GM12878 (cell line): ENCODE measurements at regions of chr14 and their contacts with region 1.

Region 1: DNA sequence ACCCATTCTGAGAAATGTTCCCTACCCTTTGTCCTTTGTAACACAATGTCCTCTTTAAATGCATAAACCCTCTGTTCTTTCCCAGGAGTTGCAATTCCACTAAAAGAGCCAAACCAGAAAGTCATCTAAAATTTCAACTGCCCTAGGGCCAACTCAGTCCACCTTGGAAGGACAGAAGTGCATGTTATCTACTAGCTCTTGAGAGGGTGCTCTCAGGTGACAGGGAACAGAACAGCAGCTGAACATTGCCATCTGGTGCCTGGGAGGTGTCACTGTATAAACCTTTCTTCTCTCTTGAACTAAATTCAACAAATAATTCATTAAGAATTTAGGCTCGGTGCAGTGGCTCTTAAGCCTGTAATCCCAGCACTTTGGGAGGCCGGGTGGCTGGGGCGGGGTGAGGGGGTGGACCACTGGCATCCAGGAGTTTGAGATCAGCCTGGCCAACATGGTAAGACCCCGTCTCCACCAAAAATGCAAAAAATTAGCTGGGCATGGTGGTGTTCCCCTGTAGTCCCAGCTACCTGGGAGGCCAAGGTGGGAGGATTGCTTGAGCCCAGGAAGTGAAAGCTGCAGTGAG is 10.3 kb upstream of the FERMT2 start:
- DNase-seq: peak; percentile 13
- ATAC-seq: peak; percentile 96
- H3K4me3 ChIP-seq: no peak overlapping the region
- H3K27ac ChIP-seq: no peak overlapping the region
- H3K4me1 ChIP-seq: no peaks in the 10 kb centered on the region
- H3K27me3 ChIP-seq: no peaks in the 10 kb centered on the region
- CTCF ChIP-seq: peak; percentile 58 to 82 (median 64)
- EP300 ChIP-seq: no peak
- POLR2A ChIP-seq: no peak
- RAD21 ChIP-seq: peak; percentile 95

Region 2: GRCh38 chr14:52829527-52829926 is 131.6 kb before region 1 on chr14:
- CTCF ChIA-PET with region 1: interaction called, 115 read pairs
- POLR2A ChIA-PET with region 1: interaction called, 4 read pairs
- RAD21 ChIA-PET with region 1: interaction called, 68 read pairs
- SMC1A ChIA-PET with region 1: interaction called, 58 read pairs
- in situ Hi-C with region 1: loop called (anchors 5 kb)
- intact Hi-C with region 1: no loop called
- DNase-seq: no peak
- ATAC-seq: no peak
- H3K4me3 ChIP-seq: no peak overlapping the region
- H3K27ac ChIP-seq: no peak overlapping the region
- H3K4me1 ChIP-seq: peaks cover 2% of the 10 kb centered on the region
- H3K27me3 ChIP-seq: no peaks in the 10 kb centered on the region
- CTCF ChIP-seq: no peak
- EP300 ChIP-seq: no peak
- POLR2A ChIP-seq: no peak
- RAD21 ChIP-seq: no peak

Region 3: DNA sequence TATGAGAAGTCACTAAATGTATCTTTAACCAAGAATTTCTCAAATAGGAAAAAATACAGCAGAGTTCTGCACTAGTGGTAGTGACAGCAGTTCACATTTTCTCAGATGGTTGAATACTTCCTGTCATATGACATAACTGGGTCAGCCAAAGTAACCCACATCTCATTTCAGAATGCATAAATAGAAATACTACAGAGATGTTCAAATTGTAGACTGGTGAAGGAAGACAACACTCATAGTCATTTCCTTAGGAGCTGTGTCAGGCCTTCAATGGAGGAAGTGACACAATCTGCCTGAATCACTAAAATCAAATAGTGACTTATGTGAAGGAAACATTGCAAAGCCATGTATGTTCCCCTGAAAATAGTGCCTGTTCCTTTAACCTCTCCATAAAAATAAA is 42.7 kb before region 1 on chr14:
- CTCF ChIA-PET with region 1: interaction called, 43 read pairs
- POLR2A ChIA-PET with region 1: no interaction called
- RAD21 ChIA-PET with region 1: interaction called, 22 read pairs
- SMC1A ChIA-PET with region 1: interaction called, 47 read pairs
- in situ Hi-C with region 1: no loop called
- intact Hi-C with region 1: no loop called
- DNase-seq: peak; percentile 62
- ATAC-seq: peak; percentile 93
- H3K4me3 ChIP-seq: no peak overlapping the region
- H3K27ac ChIP-seq: peak overlapping the region; percentile 36
- H3K4me1 ChIP-seq: peaks cover 6% of the 10 kb centered on the region
- H3K27me3 ChIP-seq: no peaks in the 10 kb centered on the region
- CTCF ChIP-seq: no peak
- EP300 ChIP-seq: 0 out of 4 replicates have a peak, but pooled peaks have one; percentile 26 to 40
- POLR2A ChIP-seq: no peak
- RAD21 ChIP-seq: no peak

Region 4: DNA sequence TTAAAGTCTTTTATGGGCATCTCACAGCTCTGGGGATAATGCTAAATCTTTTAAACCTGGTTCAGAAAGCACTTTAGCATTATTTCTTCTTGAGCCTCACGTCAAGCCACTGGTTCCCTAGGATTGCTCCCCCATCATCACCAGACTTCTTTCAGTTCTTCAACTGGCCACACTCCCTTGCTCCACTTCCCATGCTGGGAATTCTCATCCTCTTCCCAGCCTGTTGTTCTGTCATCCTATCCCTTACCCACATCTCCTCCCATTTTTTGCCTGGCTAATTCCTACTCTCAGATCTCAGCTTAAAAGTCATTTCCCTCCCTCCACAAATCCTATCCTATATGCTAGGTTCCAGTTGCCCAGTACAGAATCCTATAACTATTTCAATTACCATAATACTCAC is 24.7 kb before region 1 on chr14:
- CTCF ChIA-PET with region 1: interaction called, 9 read pairs
- POLR2A ChIA-PET with region 1: no interaction called
- RAD21 ChIA-PET with region 1: interaction called, 3 read pairs
- SMC1A ChIA-PET with region 1: interaction called, 13 read pairs
- in situ Hi-C with region 1: no loop called
- intact Hi-C with region 1: no loop called
- DNase-seq: no peak
- ATAC-seq: no peak
- H3K4me3 ChIP-seq: no peak overlapping the region
- H3K27ac ChIP-seq: no peak overlapping the region
- H3K4me1 ChIP-seq: no peaks in the 10 kb centered on the region
- H3K27me3 ChIP-seq: no peaks in the 10 kb centered on the region; a peak in 1 of 4 replicates
- CTCF ChIP-seq: no peak
- EP300 ChIP-seq: no peak
- POLR2A ChIP-seq: no peak
- RAD21 ChIP-seq: no peak

Region 5: GRCh38 chr14:52998376-52999015 is 37.3 kb after region 1 on chr14:
- CTCF ChIA-PET with region 1: no interaction called
- POLR2A ChIA-PET with region 1: no interaction called
- RAD21 ChIA-PET with region 1: no interaction called
- SMC1A ChIA-PET with region 1: no interaction called
- in situ Hi-C with region 1: no loop called
- intact Hi-C with region 1: no loop called
- DNase-seq: no peak
- ATAC-seq: no peak
- H3K4me3 ChIP-seq: no peak overlapping the region
- H3K27ac ChIP-seq: no peak overlapping the region
- H3K4me1 ChIP-seq: no peaks in the 10 kb centered on the region
- H3K27me3 ChIP-seq: no peaks in the 10 kb centered on the region
- CTCF ChIP-seq: no peak
- EP300 ChIP-seq: no peak
- POLR2A ChIP-seq: no peak
- RAD21 ChIP-seq: no peak

Region 6: DNA sequence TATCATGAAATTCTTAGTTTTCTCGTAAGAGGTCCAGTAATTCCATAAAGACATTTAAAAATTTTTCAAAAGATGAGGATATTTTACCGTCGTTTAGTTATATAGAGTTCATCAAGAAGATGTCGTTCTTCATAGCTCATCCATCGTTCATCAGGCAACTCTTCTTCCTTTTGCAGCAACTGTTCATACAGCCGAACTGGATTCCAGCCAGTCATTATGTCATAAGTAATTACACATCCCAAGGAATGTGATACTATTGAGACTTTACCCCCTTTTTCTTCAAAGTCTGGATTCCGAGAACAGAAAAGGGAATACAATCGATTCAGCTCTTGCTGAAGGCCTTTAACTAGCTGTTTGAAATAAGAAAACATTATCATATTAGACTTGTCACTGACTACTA is 101.7 kb after region 1 on chr14:
- CTCF ChIA-PET with region 1: no interaction called
- POLR2A ChIA-PET with region 1: no interaction called
- RAD21 ChIA-PET with region 1: no interaction called
- SMC1A ChIA-PET with region 1: no interaction called
- in situ Hi-C with region 1: no loop called
- intact Hi-C with region 1: no loop called
- DNase-seq: no peak
- ATAC-seq: no peak
- H3K4me3 ChIP-seq: no peak overlapping the region
- H3K27ac ChIP-seq: no peak overlapping the region
- H3K4me1 ChIP-seq: no peaks in the 10 kb centered on the region
- H3K27me3 ChIP-seq: no peaks in the 10 kb centered on the region
- CTCF ChIP-seq: no peak
- EP300 ChIP-seq: no peak
- POLR2A ChIP-seq: no peak
- RAD21 ChIP-seq: no peak

Region 7: DNA sequence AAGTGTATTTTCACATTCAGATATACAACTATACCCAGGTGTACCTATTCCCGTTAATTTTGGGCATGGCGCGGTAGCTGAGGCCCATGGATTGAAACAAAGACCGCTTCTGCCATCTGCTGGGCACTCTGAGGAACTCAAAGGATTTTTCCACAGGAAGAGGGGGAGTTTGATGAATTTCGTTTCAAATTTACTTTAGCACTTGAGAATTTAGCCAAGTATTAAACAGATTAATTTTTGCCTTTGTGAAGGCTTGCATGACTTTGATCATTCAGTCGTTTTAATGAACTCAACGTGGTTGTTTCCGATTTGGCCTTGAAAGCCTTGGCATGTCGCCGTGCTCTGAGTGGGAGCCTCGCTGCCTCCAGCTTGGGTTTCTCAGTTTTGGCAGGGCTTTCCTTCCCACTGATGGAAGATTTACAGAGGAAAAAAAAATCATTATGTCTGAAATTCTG is 345.1 kb after region 1 on chr14:
- CTCF ChIA-PET with region 1: interaction called, 28 read pairs
- POLR2A ChIA-PET with region 1: no interaction called
- RAD21 ChIA-PET with region 1: interaction called, 3 read pairs
- SMC1A ChIA-PET with region 1: interaction called, 8 read pairs
- in situ Hi-C with region 1: no loop called
- intact Hi-C with region 1: loop called (anchors 2 kb)
- DNase-seq: no peak
- ATAC-seq: peak; percentile 77
- H3K4me3 ChIP-seq: peak overlapping the region; percentile 74; the same call in 1 of the 2 replicates
- H3K27ac ChIP-seq: no peak overlapping the region
- H3K4me1 ChIP-seq: peaks cover 6% of the 10 kb centered on the region
- H3K27me3 ChIP-seq: no peaks in the 10 kb centered on the region
- CTCF ChIP-seq: peak; percentile 67 to 80 (median 69); a peak in 5 of 6 replicates
- EP300 ChIP-seq: no peak
- POLR2A ChIP-seq: no peak
- RAD21 ChIP-seq: peak; percentile 93